ENCODE measurements at regions of chr11 and their contacts with region 1.

Region 1: GRCh38 chr11:20127671-20128527 is 32.4 kb downstream of the DBX1 start:
- DNase-seq: peak; percentile 83
- ATAC-seq: peak; percentile 77
- H3K4me3 Mint-ChIP-seq: no peak overlapping the region
- H3K27ac Mint-ChIP-seq: no peak overlapping the region
- H3K4me1 Mint-ChIP-seq: peaks cover 8% of the 10 kb centered on the region
- H3K27me3 Mint-ChIP-seq: peaks cover 19% of the 10 kb centered on the region
- CTCF ChIP-seq: peak; percentile 75

Region 2: DNA sequence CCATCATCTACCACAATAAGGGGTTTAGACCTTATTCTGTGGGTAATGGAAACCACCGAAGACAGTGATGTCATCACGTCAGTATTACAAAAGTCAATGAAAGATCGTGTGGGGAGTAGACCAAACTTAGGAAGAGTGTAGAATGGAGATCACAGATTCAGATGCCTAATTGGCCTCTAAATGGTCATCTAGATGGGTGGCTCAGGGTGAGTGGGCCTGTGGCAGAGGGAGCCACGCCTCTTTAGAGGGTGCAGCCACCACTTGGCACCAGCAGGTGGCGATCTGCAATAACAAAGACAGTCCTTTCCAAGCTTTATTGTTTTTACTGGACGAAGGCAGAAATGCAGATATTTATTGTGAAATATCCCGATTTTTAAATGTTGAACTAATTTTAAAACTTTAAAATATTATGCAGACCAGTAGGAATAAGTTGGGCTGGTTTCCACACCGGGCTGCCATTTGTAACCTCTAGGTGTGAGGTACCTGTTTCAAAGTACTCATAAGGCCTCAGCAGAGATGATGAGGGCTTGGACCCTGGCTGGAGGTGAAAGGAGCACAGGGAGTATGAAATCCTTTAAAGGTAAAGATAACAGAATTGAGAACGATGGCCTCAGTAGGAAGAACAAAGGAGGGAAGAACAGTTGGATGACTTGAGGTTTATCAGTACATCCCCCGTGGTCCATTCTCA is 189.6 kb before region 1 on chr11:
- CTCF ChIA-PET with region 1: interaction called, 10 read pairs
- POLR2A ChIA-PET with region 1: no interaction called
- intact Hi-C with region 1: no loop called
- DNase-seq: peak; percentile 63
- ATAC-seq: peak; percentile 79
- H3K4me3 Mint-ChIP-seq: no peak overlapping the region
- H3K27ac Mint-ChIP-seq: no peak overlapping the region
- H3K4me1 Mint-ChIP-seq: no peaks in the 10 kb centered on the region
- H3K27me3 Mint-ChIP-seq: peaks cover 2% of the 10 kb centered on the region
- CTCF ChIP-seq: peak; percentile 74

Region 3: DNA sequence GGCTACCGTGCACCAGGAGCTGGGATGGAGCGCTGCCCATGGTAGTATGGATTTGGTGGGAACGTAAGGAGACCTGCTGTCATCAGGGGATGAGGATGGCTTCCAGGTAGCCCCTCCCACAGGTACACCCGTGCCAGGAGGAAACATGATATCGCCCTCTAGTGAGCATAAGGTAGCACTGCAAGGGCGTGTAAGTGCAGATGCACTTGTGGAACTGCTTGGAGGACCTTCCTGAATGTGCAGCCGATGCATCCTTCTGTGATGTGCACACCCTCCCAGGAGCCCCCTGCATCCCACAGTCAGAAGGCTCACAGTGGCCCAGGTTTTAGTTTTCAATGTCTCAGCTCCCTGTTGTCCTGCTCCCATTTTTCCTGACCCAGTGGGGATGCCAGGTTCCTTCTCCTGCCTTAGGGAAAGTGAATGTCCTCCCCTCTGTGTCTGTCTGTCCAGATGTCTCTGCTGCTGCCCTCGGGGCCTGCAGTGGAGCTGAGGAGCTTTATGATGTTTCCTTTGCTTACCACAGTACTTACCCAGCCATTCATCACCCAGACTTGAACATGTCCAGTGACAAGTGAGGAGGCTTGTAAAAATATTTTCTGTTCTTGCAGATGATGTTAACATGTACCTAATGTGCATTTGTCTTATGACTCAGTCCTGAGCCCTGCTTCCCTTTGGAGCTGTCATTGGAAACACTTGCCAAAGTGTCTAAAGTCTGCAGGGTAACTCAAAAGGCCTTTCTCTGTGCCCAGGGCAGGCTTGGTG is 16.8 kb before region 1 on chr11:
- CTCF ChIA-PET with region 1: interaction called, 30 read pairs
- POLR2A ChIA-PET with region 1: no interaction called
- intact Hi-C with region 1: no loop called
- DNase-seq: peak; percentile 66
- ATAC-seq: peak; percentile 90
- H3K4me3 Mint-ChIP-seq: no peak overlapping the region
- H3K27ac Mint-ChIP-seq: no peak overlapping the region
- H3K4me1 Mint-ChIP-seq: no peaks in the 10 kb centered on the region
- H3K27me3 Mint-ChIP-seq: peaks cover 6% of the 10 kb centered on the region
- CTCF ChIP-seq: peak; percentile 89

Region 4: DNA sequence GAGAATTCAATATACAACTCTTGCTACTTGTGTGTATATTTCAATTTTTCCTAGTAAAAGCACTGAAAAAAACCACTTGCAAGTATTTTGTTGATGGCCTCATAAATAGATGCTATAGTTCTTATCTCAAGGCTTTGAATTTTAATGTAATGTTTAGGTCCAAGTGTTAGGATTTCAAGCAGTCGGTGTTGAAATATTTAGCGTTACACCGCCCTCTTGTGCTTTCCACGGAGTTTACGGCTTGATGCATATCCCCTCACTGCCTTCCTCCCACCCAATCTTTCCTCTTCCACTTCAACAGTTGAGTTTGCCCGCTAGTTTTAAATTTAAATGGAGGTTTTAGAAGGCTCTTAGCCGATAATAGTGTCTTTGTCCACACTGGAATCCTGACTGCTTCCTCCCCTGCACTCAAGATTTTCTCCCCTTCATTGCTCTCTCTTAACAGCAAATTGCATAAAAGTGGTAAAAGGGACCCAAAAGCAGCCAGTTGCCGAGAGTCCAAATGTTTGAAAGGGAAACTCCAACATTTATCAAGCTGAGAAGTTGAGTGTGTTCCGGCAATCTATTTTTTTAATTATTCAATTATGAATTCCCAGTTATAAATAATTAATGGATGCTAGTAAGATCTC is 209.7 kb after region 1 on chr11:
- CTCF ChIA-PET with region 1: interaction called, 9 read pairs
- POLR2A ChIA-PET with region 1: no interaction called
- intact Hi-C with region 1: loop called (anchors 5 kb)
- DNase-seq: peak; percentile 36
- ATAC-seq: no peak
- H3K4me3 Mint-ChIP-seq: no peak overlapping the region
- H3K27ac Mint-ChIP-seq: no peak overlapping the region
- H3K4me1 Mint-ChIP-seq: peaks cover 3% of the 10 kb centered on the region
- H3K27me3 Mint-ChIP-seq: peaks cover 49% of the 10 kb centered on the region
- CTCF ChIP-seq: peak; percentile 55

Region 5: DNA sequence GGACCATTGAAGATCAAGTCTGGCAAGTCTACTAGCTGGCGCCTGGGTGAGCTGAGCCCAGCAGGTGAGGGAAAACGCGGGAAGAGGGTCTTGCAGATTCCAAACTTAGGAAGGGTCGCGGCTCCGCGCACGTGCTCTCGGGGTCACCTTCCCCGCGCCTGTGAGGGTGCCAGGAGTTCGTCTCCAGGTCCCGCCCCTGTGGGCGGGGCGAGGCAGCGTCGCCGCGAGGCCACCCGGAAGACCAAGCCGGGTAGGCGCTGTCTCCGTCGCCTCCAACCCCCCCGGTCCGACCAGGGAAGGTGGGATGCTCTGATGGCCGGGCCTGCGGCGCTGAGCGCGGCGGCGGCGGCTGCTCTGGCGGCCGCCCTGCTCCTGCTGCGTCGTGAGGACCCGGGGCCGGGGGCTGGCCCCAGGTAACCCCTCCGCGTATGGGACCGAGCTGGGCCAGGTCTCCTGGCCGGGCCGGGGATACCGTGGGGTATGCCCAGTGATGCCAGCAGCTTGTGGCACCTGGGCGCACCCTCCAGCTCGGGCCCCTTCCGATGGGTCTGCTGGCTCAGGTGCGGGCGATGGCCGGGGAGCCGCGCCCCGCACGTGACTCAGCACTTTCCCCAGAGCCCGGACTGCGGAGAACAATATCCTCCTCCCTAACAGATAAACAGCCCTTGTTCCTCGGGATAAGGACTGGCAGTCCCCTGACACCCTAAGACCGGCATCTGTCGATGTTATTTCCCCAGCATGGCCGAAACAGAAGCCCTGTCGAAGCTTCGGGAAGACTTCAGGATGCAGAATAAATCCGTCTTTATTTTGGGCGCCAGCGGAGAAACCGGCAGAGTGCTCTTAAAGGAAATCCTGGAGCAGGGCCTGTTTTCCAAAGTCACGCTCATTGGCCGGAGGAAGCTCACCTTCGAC is 235.9 kb after region 1 on chr11 and contains the start of gene HTATIP2:
- CTCF ChIA-PET with region 1: interaction called, 31 read pairs
- POLR2A ChIA-PET with region 1: no interaction called
- intact Hi-C with region 1: no loop called
- DNase-seq: peak; percentile 79
- ATAC-seq: peak; percentile 85
- H3K4me3 Mint-ChIP-seq: peak within 1 kb of the TSS; percentile 81
- H3K27ac Mint-ChIP-seq: peak within 1 kb of the TSS; percentile 89
- H3K4me1 Mint-ChIP-seq: peaks cover 60% of the 10 kb centered on the region
- H3K27me3 Mint-ChIP-seq: no peaks in the 10 kb centered on the region
- CTCF ChIP-seq: no peak
- total RNA-seq, gene HTATIP2: 42.8 to 44.8 TPM

Measured in activated CD8-positive, alpha-beta T cell treated with anti-CD3 and anti-CD28 coated beads for 36 hours (primary cell).